ENCODE measurements at regions of chr18 and their contacts with region 1.

Region 1: DNA sequence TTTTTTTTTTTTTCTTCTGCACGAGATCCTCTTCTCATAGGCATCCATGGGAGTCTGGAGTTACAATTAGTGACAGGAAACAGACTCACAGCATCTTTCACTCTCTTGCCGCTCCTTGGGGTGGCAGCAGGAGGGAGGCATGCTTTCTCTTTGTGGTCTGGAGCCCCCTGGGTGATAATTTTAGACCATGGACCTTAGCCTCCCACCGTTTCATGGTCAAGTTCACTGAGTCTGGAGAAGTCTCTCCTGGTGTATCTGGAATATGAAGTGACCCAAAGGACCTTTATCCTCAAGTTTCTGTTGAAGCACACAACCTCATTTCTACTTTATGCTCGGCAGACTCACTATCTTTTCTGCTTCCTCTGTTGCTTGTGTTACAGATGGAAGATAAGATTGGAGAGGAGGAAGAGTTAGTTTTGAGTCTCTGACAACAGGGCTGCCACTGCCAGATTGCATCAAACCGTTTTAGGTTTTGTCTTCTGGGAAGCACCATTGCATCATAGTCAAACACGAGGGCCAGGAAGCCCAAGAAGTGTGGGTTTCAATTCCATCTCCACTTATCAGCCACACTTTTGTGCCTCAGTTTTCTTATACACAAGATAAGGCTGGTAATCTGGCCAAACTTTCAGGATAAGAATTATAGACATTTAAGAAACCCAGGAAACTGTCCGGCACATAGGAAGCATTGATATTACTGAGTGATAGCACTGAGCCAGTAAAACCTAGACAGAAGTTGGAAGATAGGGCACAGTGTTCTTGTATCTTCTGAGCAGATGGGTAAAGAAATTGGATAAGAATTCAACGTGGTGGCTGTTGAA is 62.3 kb downstream of the ADCYAP1 start:
- DNase-seq: no peak

Region 2: GRCh38 chr18:1240701-1241100 is 273.7 kb after region 1 on chr18:
- intact Hi-C with region 1: loop called in 1 of 2 experiments (anchors 2 kb)
- DNase-seq: no peak